MCF 10A (cell line): ENCODE measurements at regions of chr10 and their contacts with region 1.

Region 1: GRCh38 chr10:25522946-25523608 is 348.3 kb downstream of the GPR158 start:
- DNase-seq: peak; percentile 53
- H3K4me3 Mint-ChIP-seq: no peak overlapping the region
- H3K27ac Mint-ChIP-seq: no peak overlapping the region
- H3K4me1 Mint-ChIP-seq: no peaks in the 10 kb centered on the region
- H3K27me3 Mint-ChIP-seq: peaks cover 48% of the 10 kb centered on the region
- CTCF ChIP-seq: peak; percentile 19

Region 2: DNA sequence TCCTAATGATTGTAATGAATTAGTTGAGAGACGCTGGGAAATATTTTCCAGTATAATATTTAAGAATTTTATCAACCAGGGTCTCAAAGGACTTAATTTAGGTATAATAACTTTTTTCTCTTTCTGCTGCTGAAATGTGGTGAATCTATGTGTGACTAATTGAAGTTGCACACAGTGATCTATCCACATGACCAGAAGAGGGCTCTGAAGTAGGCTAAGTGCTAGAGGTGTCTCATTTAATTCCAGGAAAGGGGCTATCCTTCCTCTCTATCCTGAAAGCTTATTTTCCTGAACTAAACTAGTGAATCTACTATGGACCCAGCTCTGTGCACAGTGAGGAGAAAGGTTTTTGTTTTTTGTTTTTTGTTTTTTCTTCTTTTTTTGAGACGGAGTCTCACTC is 116.6 kb after region 1 on chr10:
- CTCF ChIA-PET with region 1: no interaction called
- POLR2A ChIA-PET with region 1: no interaction called
- intact Hi-C with region 1: loop called (anchors 5 kb)
- DNase-seq: no peak
- H3K4me3 Mint-ChIP-seq: no peak overlapping the region
- H3K27ac Mint-ChIP-seq: no peak overlapping the region
- H3K4me1 Mint-ChIP-seq: no peaks in the 10 kb centered on the region
- H3K27me3 Mint-ChIP-seq: peaks cover 8% of the 10 kb centered on the region
- CTCF ChIP-seq: no peak

Region 3: GRCh38 chr10:25839683-25840082 is 316.6 kb after region 1 on chr10:
- CTCF ChIA-PET with region 1: no interaction called
- POLR2A ChIA-PET with region 1: no interaction called
- intact Hi-C with region 1: no loop called
- DNase-seq: no peak
- H3K4me3 Mint-ChIP-seq: no peak overlapping the region
- H3K27ac Mint-ChIP-seq: no peak overlapping the region
- H3K4me1 Mint-ChIP-seq: no peaks in the 10 kb centered on the region
- H3K27me3 Mint-ChIP-seq: peaks cover 62% of the 10 kb centered on the region
- CTCF ChIP-seq: no peak